ENCODE measurements at regions of chr7 and their contacts with region 1.

Region 1: GRCh38 chr7:105522062-105522936 is at the start of gene PUS7:
- DNase-seq: peak; percentile 89 to 91
- H3K4me3 ChIP-seq: peak within 1 kb of the TSS; percentile 97
- H3K4me3 Mint-ChIP-seq: peak within 1 kb of the TSS; percentile 92
- H3K27ac Mint-ChIP-seq: peak within 1 kb of the TSS; percentile 94
- H3K4me1 ChIP-seq: 0 out of 2 replicates have a peak, but pooled peaks cover 9% of the 10 kb centered on the region
- H3K4me1 Mint-ChIP-seq: peaks cover 8% of the 10 kb centered on the region
- H3K27me3 ChIP-seq: no peaks in the 10 kb centered on the region
- H3K27me3 Mint-ChIP-seq: no peaks in the 10 kb centered on the region
- CTCF ChIP-seq: no peak
- total RNA-seq, gene PUS7: 36.3 TPM in 2 replicates

Region 2: DNA sequence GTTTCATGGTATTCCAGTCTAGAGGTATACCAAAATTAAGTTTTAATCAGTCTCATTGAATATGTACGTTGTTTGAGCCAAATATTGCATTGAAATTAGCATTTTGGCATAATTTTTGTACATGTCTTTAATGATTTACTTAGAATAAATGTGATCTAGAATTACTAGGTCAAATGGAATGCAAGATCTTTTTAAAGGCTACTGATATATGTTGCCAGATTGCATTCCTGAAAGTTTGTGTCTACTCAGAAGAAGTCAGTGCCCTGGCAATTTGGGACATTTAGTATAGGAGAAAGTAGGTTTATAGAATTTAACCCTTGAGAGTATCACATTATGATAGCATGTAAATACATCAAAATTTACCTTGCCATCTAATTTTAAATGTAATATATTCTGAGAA is 475.9 kb before region 1 on chr7:
- CTCF ChIA-PET with region 1: no interaction called
- POLR2A ChIA-PET with region 1: no interaction called
- intact Hi-C with region 1: loop called (anchors 5 kb)
- DNase-seq: no peak
- H3K4me3 ChIP-seq: no peak overlapping the region
- H3K4me3 Mint-ChIP-seq: no peak overlapping the region
- H3K27ac Mint-ChIP-seq: peak overlapping the region; percentile 23
- H3K4me1 ChIP-seq: peaks cover 35% of the 10 kb centered on the region
- H3K4me1 Mint-ChIP-seq: peaks cover 40% of the 10 kb centered on the region
- H3K27me3 ChIP-seq: no peaks in the 10 kb centered on the region
- H3K27me3 Mint-ChIP-seq: no peaks in the 10 kb centered on the region
- CTCF ChIP-seq: no peak

Region 3: GRCh38 chr7:106029451-106029850 is 507.2 kb after region 1 on chr7:
- CTCF ChIA-PET with region 1: interaction called, 14 read pairs
- POLR2A ChIA-PET with region 1: no interaction called
- intact Hi-C with region 1: no loop called
- DNase-seq: no peak
- H3K4me3 ChIP-seq: no peak overlapping the region
- H3K4me3 Mint-ChIP-seq: no peak overlapping the region
- H3K27ac Mint-ChIP-seq: no peak overlapping the region
- H3K4me1 ChIP-seq: no peaks in the 10 kb centered on the region
- H3K4me1 Mint-ChIP-seq: no peaks in the 10 kb centered on the region
- H3K27me3 ChIP-seq: no peaks in the 10 kb centered on the region
- H3K27me3 Mint-ChIP-seq: peaks cover 4% of the 10 kb centered on the region
- CTCF ChIP-seq: no peak